Activated B cell treated with CpG ODN at 0.5 μM for 24 hours (primary cell): ENCODE measurements at regions of chr2 and their contacts with region 1.

Region 1: GRCh38 chr2:95539836-95540235 is 52.0 kb upstream of the TRIM43 start:
- DNase-seq: no peak
- ATAC-seq: no peak
- H3K4me3 Mint-ChIP-seq: no peak overlapping the region
- H3K27ac Mint-ChIP-seq: peak overlapping the region; percentile 64
- H3K4me1 Mint-ChIP-seq: peaks cover 14% of the 10 kb centered on the region
- H3K27me3 Mint-ChIP-seq: no peaks in the 10 kb centered on the region
- CTCF ChIP-seq: no peak

Region 2: DNA sequence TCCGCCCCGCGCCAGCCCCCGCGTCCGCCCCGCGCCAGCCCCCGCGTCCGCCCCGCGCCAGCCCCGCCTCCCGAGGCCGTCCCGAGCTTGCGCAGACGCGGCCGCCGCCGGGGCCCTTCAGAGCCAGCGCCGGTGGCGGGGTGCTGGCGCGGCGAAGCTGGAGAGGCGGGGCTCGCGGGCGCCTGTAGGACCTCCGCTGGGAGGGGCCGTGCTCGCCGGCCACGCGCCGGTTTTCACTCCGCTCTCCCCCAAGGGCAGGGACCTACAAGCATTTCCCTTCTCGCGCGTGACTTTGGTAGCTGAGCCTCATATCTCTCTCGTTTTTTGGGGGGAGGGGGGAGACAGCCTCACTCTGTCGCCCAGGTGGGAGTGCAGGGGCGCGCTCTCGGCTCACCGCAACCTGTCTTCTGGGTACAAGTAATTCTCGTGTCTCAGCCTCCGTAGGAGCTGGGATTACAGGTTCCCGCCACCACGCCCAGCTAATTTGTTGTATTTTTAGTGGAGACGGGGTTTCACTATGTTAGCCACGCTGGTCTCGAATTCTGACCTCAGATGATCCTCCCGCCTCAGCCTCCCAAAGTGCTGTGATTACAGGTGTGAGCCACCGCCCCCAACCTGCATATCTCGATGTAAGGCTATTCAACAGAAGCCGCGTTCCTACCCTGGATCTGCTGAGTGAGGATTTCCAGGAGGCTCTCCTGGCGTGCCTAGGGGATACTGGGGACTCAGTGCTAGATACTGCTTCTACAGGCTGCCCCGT is 380.0 kb before region 1 on chr2 and contains the start of gene ZNF514:
- CTCF ChIA-PET with region 1: no interaction called
- POLR2A ChIA-PET with region 1: no interaction called
- intact Hi-C with region 1: no loop called
- DNase-seq: peak; percentile 78
- ATAC-seq: peak; percentile 96
- H3K4me3 Mint-ChIP-seq: peak within 1 kb of the TSS; percentile 85
- H3K27ac Mint-ChIP-seq: peak within 1 kb of the TSS; percentile 79
- H3K4me1 Mint-ChIP-seq: peaks cover 21% of the 10 kb centered on the region
- H3K27me3 Mint-ChIP-seq: no peaks in the 10 kb centered on the region
- CTCF ChIP-seq: no peak
- total RNA-seq, gene ZNF514: 19.0 and 24.7 TPM in 2 replicates

Region 3: GRCh38 chr2:95392730-95393455 is 146.9 kb before region 1 on chr2:
- CTCF ChIA-PET with region 1: no interaction called
- POLR2A ChIA-PET with region 1: no interaction called
- intact Hi-C with region 1: no loop called
- DNase-seq: no peak
- ATAC-seq: no peak
- H3K4me3 Mint-ChIP-seq: no peak overlapping the region
- H3K27ac Mint-ChIP-seq: no peak overlapping the region
- H3K4me1 Mint-ChIP-seq: no peaks in the 10 kb centered on the region
- H3K27me3 Mint-ChIP-seq: peaks cover 3% of the 10 kb centered on the region
- CTCF ChIP-seq: no peak

Region 4: DNA sequence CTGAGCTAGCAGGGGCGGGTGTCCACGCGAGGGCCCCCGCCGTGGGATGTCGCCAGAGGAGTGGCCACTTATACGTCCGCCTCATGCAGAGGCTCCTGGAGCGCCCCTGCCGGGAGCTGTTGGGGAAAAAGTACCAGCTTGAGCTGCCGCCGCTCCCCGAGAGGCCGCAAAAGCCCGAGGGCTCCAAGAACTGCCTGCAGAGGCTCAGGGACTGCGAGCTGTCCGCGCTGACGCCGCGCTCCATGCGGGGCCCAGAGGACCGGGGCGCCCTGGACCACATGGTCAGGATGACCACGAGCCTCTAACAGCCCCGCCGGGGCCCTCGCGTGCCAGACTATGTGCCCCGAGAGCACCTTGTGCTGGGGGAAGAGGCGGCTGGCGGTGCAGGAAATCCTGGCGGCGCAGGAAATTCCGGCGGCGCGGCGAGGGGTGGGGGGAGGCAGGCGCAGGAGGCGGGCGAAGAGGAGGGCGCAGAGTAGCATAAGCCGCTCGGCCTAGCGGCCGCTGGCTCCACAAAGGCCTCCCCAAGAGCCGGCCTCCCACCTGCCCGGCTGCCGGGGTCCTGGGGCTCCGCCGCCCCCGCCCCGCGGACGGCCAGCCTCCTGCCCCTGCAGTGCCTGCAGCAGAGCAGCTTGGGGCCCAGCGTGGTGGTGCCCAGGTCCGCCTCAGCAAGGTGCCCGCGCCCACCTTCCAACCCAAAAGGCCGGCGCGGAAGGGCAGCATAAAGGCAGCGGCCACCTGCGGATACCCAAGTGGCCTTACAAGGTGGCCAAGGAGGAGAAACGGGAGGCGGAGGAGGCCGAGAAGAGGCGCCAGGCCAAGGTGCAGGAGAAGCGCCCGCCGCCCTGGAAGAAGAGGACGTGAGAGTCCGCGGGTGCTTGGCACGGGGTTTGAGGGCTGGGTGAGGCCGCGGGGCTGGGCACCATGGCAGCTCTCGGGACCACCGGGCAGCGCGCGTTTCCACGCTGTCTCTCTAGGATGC is 13.2 kb before region 1 on chr2:
- CTCF ChIA-PET with region 1: no interaction called
- POLR2A ChIA-PET with region 1: no interaction called
- intact Hi-C with region 1: loop called (anchors 1 kb)
- DNase-seq: peak; percentile 50
- ATAC-seq: peak; percentile 68
- H3K4me3 Mint-ChIP-seq: peak overlapping the region; percentile 91
- H3K27ac Mint-ChIP-seq: no peak overlapping the region
- H3K4me1 Mint-ChIP-seq: peaks cover 32% of the 10 kb centered on the region
- H3K27me3 Mint-ChIP-seq: no peaks in the 10 kb centered on the region
- CTCF ChIP-seq: no peak